ENCODE measurements at regions of chr9 and their contacts with region 1.

Region 1: GRCh38 chr9:92716557-92716956 is 46.6 kb upstream of the IPPK start:
- DNase-seq: peak; percentile 42 to 73
- ATAC-seq: peak; percentile 69 to 90
- H3K4me3 ChIP-seq: no peak overlapping the region
- H3K27ac ChIP-seq: no peak overlapping the region
- H3K4me1 ChIP-seq: no peaks in the 10 kb centered on the region
- CTCF ChIP-seq: peak; percentile 80
- EP300 ChIP-seq: no peak
- POLR2A ChIP-seq: no peak
- RAD21 ChIP-seq: peak; percentile 66 to 74

Region 2: GRCh38 chr9:92680166-92681119 is 36.1 kb before region 1 on chr9:
- CTCF ChIA-PET with region 1: no interaction called
- POLR2A ChIA-PET with region 1: no interaction called
- DNase-seq: no peak
- ATAC-seq: peak; percentile 34 to 47; a peak in 3 of 6 replicates
- H3K4me3 ChIP-seq: no peak overlapping the region
- H3K27ac ChIP-seq: no peak overlapping the region
- H3K4me1 ChIP-seq: no peaks in the 10 kb centered on the region
- CTCF ChIP-seq: no peak
- EP300 ChIP-seq: no peak
- POLR2A ChIP-seq: no peak
- RAD21 ChIP-seq: no peak

Region 3: GRCh38 chr9:92728831-92729734 is 12.5 kb after region 1 on chr9:
- CTCF ChIA-PET with region 1: interaction called, 81 read pairs
- POLR2A ChIA-PET with region 1: no interaction called
- DNase-seq: no peak
- ATAC-seq: peak in 1 of 2 experiments; percentile 81; a peak in 4 of 6 replicates
- H3K4me3 ChIP-seq: no peak overlapping the region
- H3K27ac ChIP-seq: no peak overlapping the region
- H3K4me1 ChIP-seq: no peaks in the 10 kb centered on the region
- CTCF ChIP-seq: no peak
- EP300 ChIP-seq: no peak
- POLR2A ChIP-seq: no peak
- RAD21 ChIP-seq: no peak

Region 4: GRCh38 chr9:92747459-92748232 is 31.1 kb after region 1 on chr9:
- CTCF ChIA-PET with region 1: interaction called, 15 read pairs
- POLR2A ChIA-PET with region 1: no interaction called
- DNase-seq: no peak
- ATAC-seq: peak in 1 of 2 experiments; percentile 70; a peak in 3 of 6 replicates
- H3K4me3 ChIP-seq: no peak overlapping the region
- H3K27ac ChIP-seq: peak overlapping the region in 1 of 2 experiments; percentile 61; a peak in 4 of 6 replicates
- H3K4me1 ChIP-seq: peaks cover 24% of the 10 kb centered on the region
- CTCF ChIP-seq: no peak
- EP300 ChIP-seq: no peak
- POLR2A ChIP-seq: no peak
- RAD21 ChIP-seq: no peak

Region 5: GRCh38 chr9:92764988-92765936 is 48.7 kb after region 1 on chr9:
- CTCF ChIA-PET with region 1: interaction called, 13 read pairs
- POLR2A ChIA-PET with region 1: no interaction called
- DNase-seq: peak; percentile 96 to 97
- ATAC-seq: peak; percentile 95 to 96
- H3K4me3 ChIP-seq: peak overlapping the region; percentile 90
- H3K27ac ChIP-seq: peak overlapping the region; percentile 99
- H3K4me1 ChIP-seq: peaks cover 18% of the 10 kb centered on the region
- CTCF ChIP-seq: peak; percentile 91
- EP300 ChIP-seq: no peak
- POLR2A ChIP-seq: peak; percentile 72
- RAD21 ChIP-seq: peak; percentile 45 to 52; a peak in 4 of 5 replicates

Region 6: GRCh38 chr9:92798358-92798757 is 81.8 kb after region 1 on chr9:
- CTCF ChIA-PET with region 1: interaction called, 138 read pairs
- POLR2A ChIA-PET with region 1: no interaction called
- DNase-seq: no peak
- ATAC-seq: no peak
- H3K4me3 ChIP-seq: no peak overlapping the region
- H3K27ac ChIP-seq: no peak overlapping the region
- H3K4me1 ChIP-seq: no peaks in the 10 kb centered on the region
- CTCF ChIP-seq: no peak
- EP300 ChIP-seq: no peak
- POLR2A ChIP-seq: no peak
- RAD21 ChIP-seq: no peak

Region 7: DNA sequence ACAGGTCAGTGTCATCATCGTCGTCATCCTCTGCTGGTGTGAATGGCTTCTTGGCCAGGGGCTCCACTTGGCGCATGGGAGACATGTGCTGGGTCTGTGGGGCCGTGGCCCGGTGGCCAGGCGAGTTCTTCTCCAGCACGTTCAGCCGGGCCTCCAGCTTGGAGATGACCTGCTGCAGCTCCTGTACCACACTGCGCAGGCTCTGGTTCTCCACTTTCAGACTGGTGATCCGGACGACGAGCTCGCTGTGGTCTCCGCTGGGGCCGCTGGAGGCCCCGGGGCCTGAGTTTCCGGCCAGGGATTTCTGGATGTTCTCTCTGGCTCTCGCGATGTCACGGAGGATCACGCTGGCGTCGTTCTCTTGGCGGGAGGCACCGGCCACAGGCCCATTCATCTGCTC is 120.6 kb after region 1 on chr9:
- CTCF ChIA-PET with region 1: no interaction called
- POLR2A ChIA-PET with region 1: no interaction called
- DNase-seq: no peak
- ATAC-seq: no peak
- H3K4me3 ChIP-seq: no peak overlapping the region
- H3K27ac ChIP-seq: no peak overlapping the region
- H3K4me1 ChIP-seq: no peaks in the 10 kb centered on the region
- CTCF ChIP-seq: no peak
- EP300 ChIP-seq: no peak
- POLR2A ChIP-seq: no peak
- RAD21 ChIP-seq: no peak

Region 8: GRCh38 chr9:93154315-93154903 is 437.9 kb after region 1 on chr9:
- CTCF ChIA-PET with region 1: no interaction called
- POLR2A ChIA-PET with region 1: no interaction called
- DNase-seq: peak; percentile 47 to 76
- ATAC-seq: peak; percentile 71 to 86
- H3K4me3 ChIP-seq: no peak overlapping the region
- H3K27ac ChIP-seq: no peak overlapping the region
- H3K4me1 ChIP-seq: peaks cover under 1% of the 10 kb centered on the region; the same call in 1 of the 3 replicates
- CTCF ChIP-seq: peak; percentile 46
- EP300 ChIP-seq: no peak
- POLR2A ChIP-seq: no peak
- RAD21 ChIP-seq: peak; percentile 24 to 51; a peak in 2 of 5 replicates

Measured in A549 (cell line).